MCF 10A (cell line): ENCODE measurements at regions of chr3 and their contacts with region 1.

Region 1: GRCh38 chr3:160163229-160163878 is 61.9 kb upstream of the C3orf80 start:
- DNase-seq: peak; percentile 37
- H3K4me3 Mint-ChIP-seq: no peak overlapping the region
- H3K27ac Mint-ChIP-seq: no peak overlapping the region
- H3K4me1 Mint-ChIP-seq: peaks cover 4% of the 10 kb centered on the region
- H3K27me3 Mint-ChIP-seq: no peaks in the 10 kb centered on the region
- CTCF ChIP-seq: peak; percentile 39

Region 2: GRCh38 chr3:160150525-160150924 is 12.8 kb before region 1 on chr3:
- CTCF ChIA-PET with region 1: interaction called, 14 read pairs
- POLR2A ChIA-PET with region 1: no interaction called
- intact Hi-C with region 1: no loop called
- DNase-seq: peak; percentile 18
- H3K4me3 Mint-ChIP-seq: no peak overlapping the region
- H3K27ac Mint-ChIP-seq: no peak overlapping the region
- H3K4me1 Mint-ChIP-seq: peaks cover 6% of the 10 kb centered on the region
- H3K27me3 Mint-ChIP-seq: no peaks in the 10 kb centered on the region
- CTCF ChIP-seq: no peak

Region 3: DNA sequence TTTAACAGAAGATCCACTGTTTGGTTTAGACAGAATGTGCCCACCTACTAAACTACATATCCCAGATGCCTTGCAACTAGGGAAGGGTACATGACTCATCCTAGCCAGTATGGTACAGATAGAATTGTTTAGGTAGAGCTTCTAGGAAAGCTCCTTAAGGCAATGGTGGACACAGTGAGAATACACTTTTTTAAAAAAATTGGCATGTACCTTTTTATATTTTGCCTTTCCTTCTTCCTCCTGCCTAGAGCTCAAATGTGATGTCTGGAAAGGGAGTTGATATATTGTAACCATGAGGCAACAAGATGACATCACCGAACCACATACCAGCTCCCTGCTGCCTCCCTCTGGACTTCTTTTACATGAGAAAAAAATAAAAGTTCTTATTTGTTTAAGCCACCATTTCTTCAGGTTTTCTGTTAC is 47.5 kb after region 1 on chr3:
- CTCF ChIA-PET with region 1: interaction called, 13 read pairs
- POLR2A ChIA-PET with region 1: interaction called, 3 read pairs
- intact Hi-C with region 1: loop called (anchors 2 kb)
- DNase-seq: peak; percentile 56
- H3K4me3 Mint-ChIP-seq: no peak overlapping the region
- H3K27ac Mint-ChIP-seq: no peak overlapping the region
- H3K4me1 Mint-ChIP-seq: peaks cover 7% of the 10 kb centered on the region
- H3K27me3 Mint-ChIP-seq: no peaks in the 10 kb centered on the region
- CTCF ChIP-seq: peak; percentile 37

Region 4: GRCh38 chr3:160343132-160343531 is 179.8 kb after region 1 on chr3:
- CTCF ChIA-PET with region 1: interaction called, 39 read pairs
- POLR2A ChIA-PET with region 1: interaction called, 3 read pairs
- intact Hi-C with region 1: loop called (anchors 1 kb)
- DNase-seq: peak; percentile 36
- H3K4me3 Mint-ChIP-seq: no peak overlapping the region
- H3K27ac Mint-ChIP-seq: no peak overlapping the region
- H3K4me1 Mint-ChIP-seq: no peaks in the 10 kb centered on the region
- H3K27me3 Mint-ChIP-seq: no peaks in the 10 kb centered on the region
- CTCF ChIP-seq: peak; percentile 47

Region 5: DNA sequence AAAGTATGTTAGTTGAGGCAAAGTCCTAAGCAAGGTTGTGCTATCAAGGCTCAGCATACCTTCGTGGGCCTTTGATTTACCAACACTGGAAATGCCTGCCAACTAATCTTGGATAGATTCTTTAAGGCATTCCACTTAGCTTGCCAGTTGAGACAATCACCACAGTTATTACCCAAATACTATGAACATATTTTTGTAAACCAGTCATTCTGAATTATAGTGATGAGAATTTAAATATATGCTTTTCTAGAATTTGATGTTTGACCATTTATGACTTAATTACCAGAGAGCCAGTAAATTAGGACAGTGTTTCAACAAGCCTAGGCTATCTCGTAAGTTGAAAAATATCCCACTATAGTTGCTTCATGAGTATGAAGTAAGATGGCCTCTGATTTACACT is 270.7 kb after region 1 on chr3:
- CTCF ChIA-PET with region 1: no interaction called
- POLR2A ChIA-PET with region 1: no interaction called
- intact Hi-C with region 1: no loop called
- DNase-seq: peak; percentile 24
- H3K4me3 Mint-ChIP-seq: no peak overlapping the region
- H3K27ac Mint-ChIP-seq: no peak overlapping the region
- H3K4me1 Mint-ChIP-seq: no peaks in the 10 kb centered on the region
- H3K27me3 Mint-ChIP-seq: no peaks in the 10 kb centered on the region
- CTCF ChIP-seq: no peak

Region 6: GRCh38 chr3:160531311-160531710 is 368.0 kb after region 1 on chr3:
- CTCF ChIA-PET with region 1: no interaction called
- POLR2A ChIA-PET with region 1: no interaction called
- intact Hi-C with region 1: no loop called
- DNase-seq: no peak
- H3K4me3 Mint-ChIP-seq: no peak overlapping the region
- H3K27ac Mint-ChIP-seq: no peak overlapping the region
- H3K4me1 Mint-ChIP-seq: no peaks in the 10 kb centered on the region
- H3K27me3 Mint-ChIP-seq: no peaks in the 10 kb centered on the region
- CTCF ChIP-seq: no peak

Region 7: GRCh38 chr3:160686955-160687535 is 523.7 kb after region 1 on chr3:
- CTCF ChIA-PET with region 1: no interaction called
- POLR2A ChIA-PET with region 1: no interaction called
- intact Hi-C with region 1: no loop called
- DNase-seq: peak; percentile 30
- H3K4me3 Mint-ChIP-seq: no peak overlapping the region
- H3K27ac Mint-ChIP-seq: no peak overlapping the region
- H3K4me1 Mint-ChIP-seq: no peaks in the 10 kb centered on the region
- H3K27me3 Mint-ChIP-seq: no peaks in the 10 kb centered on the region
- CTCF ChIP-seq: peak; percentile 24

Region 8: GRCh38 chr3:160841455-160841854 is 678.1 kb after region 1 on chr3:
- CTCF ChIA-PET with region 1: no interaction called
- POLR2A ChIA-PET with region 1: no interaction called
- intact Hi-C with region 1: no loop called
- DNase-seq: no peak
- H3K4me3 Mint-ChIP-seq: no peak overlapping the region
- H3K27ac Mint-ChIP-seq: no peak overlapping the region
- H3K4me1 Mint-ChIP-seq: no peaks in the 10 kb centered on the region
- H3K27me3 Mint-ChIP-seq: no peaks in the 10 kb centered on the region
- CTCF ChIP-seq: no peak